ENCODE measurements at regions of chr22 and their contacts with region 1.

Region 1: GRCh38 chr22:42419243-42419881 is 12.8 kb downstream of the NFAM1 start:
- DNase-seq: no peak
- H3K4me3 ChIP-seq: no peak overlapping the region
- H3K27ac ChIP-seq: peak overlapping the region; percentile 11 to 29
- H3K4me1 ChIP-seq: no peaks in the 10 kb centered on the region
- H3K27me3 ChIP-seq: no peaks in the 10 kb centered on the region
- CTCF ChIP-seq: no peak
- POLR2A ChIP-seq: no peak

Region 2: DNA sequence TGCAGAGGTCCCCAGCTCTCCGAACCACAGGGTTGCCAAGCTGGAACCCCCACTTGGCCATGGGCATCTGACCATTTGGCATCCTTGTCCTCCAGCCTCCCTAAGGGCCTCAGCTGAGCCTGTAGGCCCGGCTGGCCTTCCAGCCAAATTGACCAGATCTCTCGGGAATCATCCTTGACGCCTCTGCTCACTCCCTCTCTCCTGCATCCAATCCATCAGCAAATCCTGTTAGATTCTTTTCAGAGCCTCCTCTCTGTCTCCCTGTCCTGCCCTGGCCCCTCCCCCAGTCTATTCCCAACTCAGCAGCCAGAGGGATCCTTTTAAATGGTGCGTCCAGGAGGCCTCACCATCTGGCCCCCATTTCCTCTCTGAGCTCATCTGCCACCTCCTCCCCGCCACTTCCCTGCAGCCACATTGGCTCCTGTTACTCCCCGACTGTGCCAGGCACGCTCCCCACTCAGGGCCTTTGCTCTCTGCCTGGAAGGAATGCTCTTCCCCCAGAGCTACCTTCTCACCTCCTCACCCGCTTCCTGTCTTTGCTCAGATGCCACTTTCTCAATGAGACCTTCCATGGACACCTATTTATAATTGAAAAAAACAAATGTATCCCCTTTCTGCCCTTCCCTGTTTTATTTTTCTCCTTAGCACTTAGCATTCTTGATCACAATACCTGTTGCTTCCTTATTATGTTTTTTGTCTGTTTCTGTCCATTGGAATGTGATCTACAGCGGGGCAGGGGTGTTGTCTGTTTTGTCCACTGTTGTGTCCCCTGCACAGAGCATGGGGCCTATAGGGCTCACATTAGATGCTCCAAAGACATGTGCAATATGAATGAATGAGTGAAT is 65.3 kb before region 1 on chr22:
- intact Hi-C with region 1: loop called (anchors 10 kb)
- DNase-seq: no peak
- H3K4me3 ChIP-seq: no peak overlapping the region
- H3K27ac ChIP-seq: no peak overlapping the region
- H3K4me1 ChIP-seq: peaks cover 8% of the 10 kb centered on the region
- H3K27me3 ChIP-seq: no peaks in the 10 kb centered on the region
- CTCF ChIP-seq: no peak
- POLR2A ChIP-seq: no peak